IMR-90 (cell line): ENCODE measurements at regions of chr22 and their contacts with region 1.

Region 1: DNA sequence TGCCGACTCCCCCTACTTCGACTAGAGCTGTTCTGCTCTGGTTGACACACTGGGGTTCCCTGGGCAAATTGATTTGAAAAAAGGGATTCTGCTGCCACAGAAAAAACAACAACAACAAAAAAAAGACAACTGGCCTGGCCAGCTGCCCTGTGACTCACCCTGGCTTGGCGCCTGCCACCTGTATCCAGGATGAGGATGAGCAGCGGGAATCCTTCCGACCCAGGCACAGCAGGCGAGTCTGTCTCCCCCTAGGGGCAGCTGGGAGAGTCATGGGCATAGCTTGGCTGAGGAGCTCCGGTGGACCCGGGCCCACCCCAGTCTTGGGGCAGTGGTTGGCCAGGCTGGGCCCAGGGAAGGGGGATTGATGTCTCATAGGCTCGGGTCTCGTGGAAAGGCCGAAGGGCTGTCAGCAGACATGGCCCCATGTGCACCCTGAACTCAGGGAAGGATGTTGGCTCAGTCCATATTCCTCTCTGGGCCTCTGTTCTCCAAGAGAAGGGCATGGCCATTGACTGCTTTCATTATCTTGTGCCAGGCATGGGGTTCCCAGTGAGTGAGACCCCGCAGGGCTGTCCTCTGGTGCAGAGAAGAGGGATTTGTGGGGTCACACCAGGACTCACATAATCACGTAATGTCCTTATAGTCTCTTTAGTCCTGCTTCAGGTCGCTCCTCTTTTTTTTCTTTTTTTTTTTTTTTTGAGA is 10.4 kb upstream of the SUN2 start:
- DNase-seq: peak; percentile 64
- ATAC-seq: peak; percentile 56
- H3K4me3 ChIP-seq: no peak overlapping the region
- H3K27ac ChIP-seq: no peak overlapping the region
- H3K4me1 ChIP-seq: peaks cover 3% of the 10 kb centered on the region
- H3K27me3 ChIP-seq: no peaks in the 10 kb centered on the region
- CTCF ChIP-seq: peak; percentile 66
- POLR2A ChIP-seq: no peak
- RAD21 ChIP-seq: peak; percentile 46

Region 2: DNA sequence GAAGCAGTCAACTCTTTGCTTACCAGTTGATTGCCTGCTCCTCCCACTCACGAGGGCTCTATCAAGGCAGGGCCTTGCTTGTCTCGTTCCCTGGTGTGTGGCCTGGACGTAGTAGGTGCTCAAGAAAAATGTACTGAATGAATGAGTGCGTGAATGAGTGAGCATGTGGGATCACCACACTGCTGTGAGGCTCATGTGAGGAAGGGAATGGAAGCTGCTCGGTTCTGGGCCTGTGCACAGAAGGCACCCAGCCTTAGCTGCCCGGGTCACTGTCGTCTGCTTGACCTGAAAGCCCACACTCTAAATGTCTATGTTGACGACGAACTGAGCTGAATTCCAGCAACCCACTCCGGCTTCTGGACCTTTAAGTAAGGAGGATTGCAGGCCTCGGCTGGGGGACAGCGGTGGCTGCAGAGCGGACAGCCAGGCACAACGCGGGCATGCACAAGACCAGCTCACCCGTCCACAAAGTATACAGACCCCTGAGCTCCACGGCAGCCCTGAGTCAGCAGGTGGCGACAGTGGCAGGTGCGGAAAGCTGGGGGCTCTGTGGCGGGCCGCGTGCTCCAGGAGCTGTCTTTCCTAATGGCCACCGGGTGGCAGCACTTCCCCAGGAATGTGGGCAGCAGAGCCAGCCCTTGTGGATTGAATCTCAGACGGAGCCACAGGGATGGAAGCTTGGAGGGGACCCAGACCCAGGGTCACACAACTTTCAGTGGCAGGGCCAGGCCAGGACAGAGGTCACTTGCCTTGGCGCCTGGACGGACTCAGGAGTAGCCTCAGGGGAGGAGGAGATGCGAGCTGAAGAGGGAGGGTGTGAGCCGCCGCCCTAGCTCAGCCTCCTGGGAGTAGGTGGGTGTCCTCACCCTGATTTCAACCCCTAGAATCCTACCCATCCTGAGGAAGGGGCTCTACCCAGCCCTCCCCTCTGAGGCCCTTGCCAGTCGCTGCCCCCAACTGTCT is 714.0 kb before region 1 on chr22:
- CTCF ChIA-PET with region 1: no interaction called
- POLR2A ChIA-PET with region 1: no interaction called
- dilution Hi-C with region 1: no loop called
- in situ Hi-C with region 1: no loop called
- intact Hi-C with region 1: loop called (anchors 5 kb)
- DNase-seq: peak; percentile 65
- ATAC-seq: peak; percentile 83
- H3K4me3 ChIP-seq: no peak overlapping the region
- H3K27ac ChIP-seq: no peak overlapping the region
- H3K4me1 ChIP-seq: peaks cover 3% of the 10 kb centered on the region; the same call in 1 of the 2 replicates
- H3K27me3 ChIP-seq: peaks cover 5% of the 10 kb centered on the region; the same call in 1 of the 2 replicates
- CTCF ChIP-seq: peak; percentile 85
- POLR2A ChIP-seq: no peak
- RAD21 ChIP-seq: peak; percentile 89

Region 3: DNA sequence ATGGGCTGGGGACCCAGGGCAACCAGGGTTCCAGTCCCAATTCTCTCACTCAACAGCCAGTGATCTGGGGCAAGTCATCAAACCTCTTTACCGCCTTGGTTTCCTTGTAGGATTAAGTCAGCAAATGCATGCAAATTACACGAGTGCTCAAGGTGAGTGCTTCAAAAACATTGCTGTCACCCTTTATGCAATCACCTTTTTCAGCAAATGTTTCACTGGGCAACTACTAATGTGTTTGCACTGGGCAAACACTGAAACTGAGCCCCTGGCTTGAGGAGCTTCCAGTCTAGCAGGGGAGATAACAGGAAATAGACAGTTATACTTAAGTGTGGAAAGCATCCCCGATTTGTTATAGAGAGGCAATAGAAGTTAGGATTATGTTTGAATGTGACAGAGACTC is 158.5 kb before region 1 on chr22:
- CTCF ChIA-PET with region 1: no interaction called
- POLR2A ChIA-PET with region 1: no interaction called
- dilution Hi-C with region 1: no loop called
- in situ Hi-C with region 1: no loop called
- intact Hi-C with region 1: no loop called
- DNase-seq: no peak
- ATAC-seq: no peak
- H3K4me3 ChIP-seq: no peak overlapping the region
- H3K27ac ChIP-seq: no peak overlapping the region
- H3K4me1 ChIP-seq: peaks cover 4% of the 10 kb centered on the region
- H3K27me3 ChIP-seq: no peaks in the 10 kb centered on the region
- CTCF ChIP-seq: no peak
- POLR2A ChIP-seq: no peak
- RAD21 ChIP-seq: no peak

Region 4: DNA sequence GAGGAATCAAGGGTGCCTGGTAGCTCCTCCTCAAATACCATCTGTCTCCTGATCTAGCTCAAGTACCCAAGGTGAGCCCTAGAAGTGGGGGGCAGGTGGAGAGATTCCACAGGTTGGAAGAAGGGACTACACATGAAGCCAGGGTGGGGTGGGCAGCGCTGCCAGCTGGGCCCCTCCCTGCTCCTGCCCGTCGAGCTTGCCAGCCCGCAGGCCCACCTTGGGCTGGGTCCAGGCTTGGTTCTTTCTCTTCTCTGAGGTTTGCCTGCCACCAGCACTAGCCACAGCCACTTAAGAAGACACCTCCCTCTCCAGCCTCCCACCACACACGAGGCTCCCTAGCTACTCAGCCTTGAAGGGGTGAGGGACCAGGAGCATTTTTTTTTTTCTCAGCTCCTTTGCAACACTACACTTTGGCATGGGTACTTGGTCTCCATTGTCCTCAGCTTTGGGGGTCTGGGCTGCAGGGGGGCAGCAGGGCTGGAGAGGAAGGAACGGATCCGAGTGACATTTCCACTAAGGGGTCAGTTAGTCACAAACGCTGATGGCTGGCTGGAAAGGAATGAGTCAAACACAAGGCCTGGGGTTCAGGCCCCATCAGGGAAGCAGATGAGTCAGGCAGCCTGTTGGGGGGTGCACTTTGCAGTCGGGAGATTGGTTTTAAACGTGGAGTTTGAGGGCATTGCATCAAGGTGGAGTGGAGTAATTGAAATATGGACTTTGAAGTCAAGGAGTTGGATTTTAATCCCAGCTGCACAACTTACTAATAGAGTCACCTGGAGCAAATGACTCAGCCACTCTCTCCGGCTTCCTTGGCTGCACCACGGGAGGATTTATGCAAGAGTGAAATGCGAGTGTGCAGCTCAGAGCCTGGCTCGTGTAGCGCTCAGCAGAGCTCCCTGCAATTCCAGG is 85.0 kb after region 1 on chr22:
- CTCF ChIA-PET with region 1: interaction called, 5 read pairs
- POLR2A ChIA-PET with region 1: no interaction called
- dilution Hi-C with region 1: no loop called
- in situ Hi-C with region 1: no loop called
- intact Hi-C with region 1: loop called (anchors 5 kb)
- DNase-seq: peak; percentile 72
- ATAC-seq: peak; percentile 85
- H3K4me3 ChIP-seq: no peak overlapping the region
- H3K27ac ChIP-seq: no peak overlapping the region
- H3K4me1 ChIP-seq: peaks cover 4% of the 10 kb centered on the region
- H3K27me3 ChIP-seq: peaks cover 7% of the 10 kb centered on the region; the same call in 1 of the 2 replicates
- CTCF ChIP-seq: no peak
- POLR2A ChIP-seq: no peak
- RAD21 ChIP-seq: no peak

Region 5: DNA sequence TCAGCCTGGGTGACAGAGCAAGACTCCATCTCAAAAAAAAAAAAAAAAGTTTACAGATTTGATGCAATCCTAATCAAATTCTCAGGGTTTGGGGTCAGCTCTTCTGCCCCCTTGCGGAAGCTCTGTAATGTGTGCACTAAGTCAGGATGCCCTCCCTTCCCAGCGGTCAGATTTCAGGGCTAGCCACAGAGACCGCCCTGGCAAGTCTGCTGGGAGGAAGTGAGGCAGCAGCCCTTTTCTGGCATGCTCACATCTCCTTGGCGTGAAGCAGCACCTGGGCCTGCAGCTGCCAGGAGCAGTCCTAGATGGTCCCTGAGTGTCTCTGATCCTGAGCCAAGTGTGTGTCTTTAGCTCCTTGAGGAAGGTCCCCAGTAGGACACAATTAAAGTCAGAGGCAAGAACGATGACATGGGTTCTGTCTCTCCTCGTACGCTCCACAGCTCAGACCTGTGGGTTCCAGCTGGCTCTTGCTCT is 237.0 kb after region 1 on chr22:
- CTCF ChIA-PET with region 1: interaction called, 13 read pairs
- POLR2A ChIA-PET with region 1: no interaction called
- dilution Hi-C with region 1: no loop called
- in situ Hi-C with region 1: loop called (anchors 10 kb)
- intact Hi-C with region 1: loop called (anchors 1 kb)
- DNase-seq: peak; percentile 86
- ATAC-seq: peak; percentile 100
- H3K4me3 ChIP-seq: no peak overlapping the region
- H3K27ac ChIP-seq: peak overlapping the region; percentile 4; the same call in 1 of the 2 replicates
- H3K4me1 ChIP-seq: peaks cover 3% of the 10 kb centered on the region
- H3K27me3 ChIP-seq: peaks cover 8% of the 10 kb centered on the region
- CTCF ChIP-seq: peak; percentile 83
- POLR2A ChIP-seq: no peak
- RAD21 ChIP-seq: peak; percentile 72

Region 6: DNA sequence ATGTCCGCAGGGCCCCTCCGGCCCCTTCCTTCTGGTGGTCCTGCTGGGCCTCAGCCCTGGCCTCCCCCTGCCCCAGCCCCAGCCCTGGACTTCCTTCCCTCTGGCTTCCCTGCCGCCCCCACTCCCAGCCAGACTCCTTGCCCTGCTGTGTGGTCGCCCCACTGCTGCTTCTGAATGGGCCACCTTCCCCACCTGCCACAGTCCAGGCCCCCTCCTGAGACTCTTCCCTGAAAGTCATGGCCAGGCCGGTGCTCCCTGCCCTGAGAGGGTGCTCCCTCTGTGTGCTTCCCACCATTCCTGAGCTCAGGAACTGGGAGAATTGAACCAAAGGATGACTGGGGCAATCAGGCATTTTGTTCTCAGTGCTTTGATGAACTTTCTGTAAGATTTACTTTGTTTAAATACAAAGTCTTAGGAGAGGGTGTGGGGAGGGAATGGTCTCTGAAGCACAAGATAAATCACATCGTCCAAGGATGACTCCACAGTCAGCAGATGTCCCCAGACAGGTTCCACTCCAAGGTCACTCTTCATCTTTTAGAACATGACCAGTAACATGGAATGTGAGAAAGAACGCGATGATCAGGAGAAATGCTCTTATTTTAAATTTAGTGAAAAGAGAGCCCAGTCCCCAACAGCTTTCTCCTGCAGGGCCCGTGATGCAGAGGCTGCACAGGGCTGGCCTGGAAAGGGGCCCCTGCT is 255.5 kb after region 1 on chr22:
- CTCF ChIA-PET with region 1: no interaction called
- POLR2A ChIA-PET with region 1: no interaction called
- dilution Hi-C with region 1: no loop called
- in situ Hi-C with region 1: no loop called
- intact Hi-C with region 1: no loop called
- DNase-seq: no peak
- ATAC-seq: no peak
- H3K4me3 ChIP-seq: no peak overlapping the region
- H3K27ac ChIP-seq: peak overlapping the region; percentile 38
- H3K4me1 ChIP-seq: peaks cover 8% of the 10 kb centered on the region
- H3K27me3 ChIP-seq: no peaks in the 10 kb centered on the region
- CTCF ChIP-seq: no peak
- POLR2A ChIP-seq: no peak
- RAD21 ChIP-seq: no peak

Region 7: GRCh38 chr22:39319270-39320022 is 553.2 kb after region 1 on chr22 and contains the start of gene RPL3:
- CTCF ChIA-PET with region 1: no interaction called
- POLR2A ChIA-PET with region 1: no interaction called
- dilution Hi-C with region 1: no loop called
- in situ Hi-C with region 1: no loop called
- intact Hi-C with region 1: loop called (anchors 10 kb)
- DNase-seq: peak; percentile 99
- ATAC-seq: peak; percentile 81
- H3K4me3 ChIP-seq: peak within 1 kb of the TSS; percentile 76
- H3K27ac ChIP-seq: peak within 1 kb of the TSS; percentile 85
- H3K4me1 ChIP-seq: peaks cover 16% of the 10 kb centered on the region
- H3K27me3 ChIP-seq: no peaks in the 10 kb centered on the region
- CTCF ChIP-seq: no peak
- POLR2A ChIP-seq: peak; percentile 100
- RAD21 ChIP-seq: no peak
- total RNA-seq, gene RPL3: 2,871 and 3,750 TPM in 2 replicates